Vagina (tissue), 2 donors: ENCODE measurements at regions of chr13 and their contacts with region 1.

Region 1: GRCh38 chr13:32098272-32098671 is 66.7 kb downstream of the FRY start:
- DNase-seq: no peak
- H3K4me3 ChIP-seq: no peak overlapping the region
- H3K27ac ChIP-seq: no peak overlapping the region
- H3K4me1 ChIP-seq: no peaks in the 10 kb centered on the region
- H3K27me3 ChIP-seq: no peaks in the 10 kb centered on the region
- CTCF ChIP-seq: no peak
- POLR2A ChIP-seq: no peak

Region 2: GRCh38 chr13:32048816-32049215 is 49.5 kb before region 1 on chr13:
- intact Hi-C with region 1: loop called (anchors 1 kb)
- DNase-seq: no peak
- H3K4me3 ChIP-seq: no peak overlapping the region
- H3K27ac ChIP-seq: no peak overlapping the region
- H3K4me1 ChIP-seq: peaks cover 13% of the 10 kb centered on the region
- H3K27me3 ChIP-seq: no peaks in the 10 kb centered on the region
- CTCF ChIP-seq: no peak
- POLR2A ChIP-seq: no peak

Region 3: DNA sequence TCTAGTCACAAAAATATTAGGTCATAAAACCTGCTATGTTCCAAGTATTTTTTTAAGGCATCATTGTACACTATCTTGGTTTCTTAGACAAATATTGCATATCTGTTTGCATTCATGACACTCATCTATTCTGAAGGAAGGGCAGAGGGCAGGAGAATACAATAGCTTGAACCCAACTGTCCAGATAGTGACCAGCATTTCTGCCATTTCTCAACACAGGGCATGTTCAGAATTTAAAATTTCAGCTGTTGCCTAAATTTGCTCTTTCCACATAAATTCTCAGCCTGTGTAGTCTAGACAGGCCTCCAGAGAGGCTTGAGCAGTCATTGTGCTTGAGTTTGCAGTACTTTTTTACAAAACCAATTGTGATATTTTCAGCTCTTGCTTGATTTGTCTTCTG is 97.4 kb after region 1 on chr13:
- intact Hi-C with region 1: no loop called
- DNase-seq: no peak
- H3K4me3 ChIP-seq: no peak overlapping the region
- H3K27ac ChIP-seq: no peak overlapping the region
- H3K4me1 ChIP-seq: no peaks in the 10 kb centered on the region
- H3K27me3 ChIP-seq: no peaks in the 10 kb centered on the region
- CTCF ChIP-seq: no peak
- POLR2A ChIP-seq: no peak